ENCODE measurements at regions of chr2 and their contacts with region 1.

Region 1: GRCh38 chr2:46601328-46601963 is 122.1 kb downstream of the TMEM247 start:
- DNase-seq: peak in 2 of 9 experiments; percentile 16 to 35
- ATAC-seq: no peak
- H3K4me3 ChIP-seq: no peak overlapping the region
- H3K4me3 Mint-ChIP-seq: no peak overlapping the region
- H3K27ac ChIP-seq: no peak overlapping the region
- H3K27ac Mint-ChIP-seq: no peak overlapping the region
- H3K4me1 ChIP-seq: no peaks in the 10 kb centered on the region
- H3K4me1 Mint-ChIP-seq: no peaks in the 10 kb centered on the region
- H3K27me3 ChIP-seq: no peaks in the 10 kb centered on the region
- H3K27me3 Mint-ChIP-seq: no peaks in the 10 kb centered on the region
- CTCF ChIP-seq: peak; percentile 56

Region 2: DNA sequence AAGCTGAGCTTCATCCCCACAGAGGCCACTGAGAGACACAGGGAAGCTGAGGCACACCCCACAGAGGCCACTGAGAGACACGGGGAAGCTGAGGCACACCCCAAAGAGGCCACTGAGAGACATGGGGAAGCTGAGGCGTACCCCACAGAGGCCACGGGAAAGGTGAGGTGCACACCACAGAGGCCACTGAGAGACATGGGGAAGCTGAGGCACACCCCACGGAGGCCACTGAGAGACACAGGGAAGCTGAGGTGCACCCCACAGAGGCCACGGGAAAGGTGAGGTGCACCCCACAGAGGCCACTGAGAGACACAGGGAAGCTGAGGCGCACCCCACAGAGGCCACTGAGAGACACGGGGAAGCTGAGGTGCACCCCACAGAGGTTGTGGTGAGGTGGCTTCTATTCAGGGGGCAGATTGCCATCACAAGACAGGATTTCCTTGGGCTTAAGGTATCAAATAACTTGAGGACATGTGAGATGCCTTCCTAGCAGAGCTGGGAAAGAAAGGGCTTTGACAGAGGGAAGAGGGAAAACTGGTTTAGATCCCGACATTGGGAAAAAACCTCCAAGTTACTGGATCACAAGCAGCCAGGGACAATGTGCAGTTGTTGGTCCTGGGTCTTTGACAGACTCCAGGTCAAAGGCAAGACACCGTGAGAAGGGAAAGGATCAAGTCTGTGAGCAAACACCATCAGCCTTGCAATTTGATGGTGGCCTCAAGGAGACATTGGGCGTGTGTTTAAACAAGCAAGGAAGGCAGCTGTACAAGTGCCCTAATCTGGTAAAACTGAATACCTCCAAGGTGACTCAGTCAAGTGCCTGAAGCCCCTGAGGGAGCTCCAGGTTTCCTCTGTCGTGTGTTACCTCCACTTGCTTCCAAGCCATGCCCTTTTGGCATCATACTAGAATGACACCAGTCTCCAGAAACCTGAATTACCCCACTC is 437.6 kb before region 1 on chr2:
- CTCF ChIA-PET with region 1: no interaction called
- POLR2A ChIA-PET with region 1: no interaction called
- intact Hi-C with region 1: no loop called
- DNase-seq: no peak
- ATAC-seq: no peak
- H3K4me3 ChIP-seq: no peak overlapping the region
- H3K4me3 Mint-ChIP-seq: no peak overlapping the region
- H3K27ac ChIP-seq: no peak overlapping the region
- H3K27ac Mint-ChIP-seq: no peak overlapping the region
- H3K4me1 ChIP-seq: no peaks in the 10 kb centered on the region
- H3K4me1 Mint-ChIP-seq: no peaks in the 10 kb centered on the region
- H3K27me3 ChIP-seq: no peaks in the 10 kb centered on the region
- H3K27me3 Mint-ChIP-seq: no peaks in the 10 kb centered on the region
- CTCF ChIP-seq: no peak

Region 3: GRCh38 chr2:46487667-46488333 is 113.6 kb before region 1 on chr2:
- CTCF ChIA-PET with region 1: no interaction called
- POLR2A ChIA-PET with region 1: no interaction called
- intact Hi-C with region 1: no loop called
- DNase-seq: no peak
- ATAC-seq: no peak
- H3K4me3 ChIP-seq: no peak overlapping the region
- H3K4me3 Mint-ChIP-seq: no peak overlapping the region
- H3K27ac ChIP-seq: no peak overlapping the region
- H3K27ac Mint-ChIP-seq: no peak overlapping the region
- H3K4me1 ChIP-seq: no peaks in the 10 kb centered on the region
- H3K4me1 Mint-ChIP-seq: no peaks in the 10 kb centered on the region
- H3K27me3 ChIP-seq: no peaks in the 10 kb centered on the region
- H3K27me3 Mint-ChIP-seq: no peaks in the 10 kb centered on the region
- CTCF ChIP-seq: no peak

Region 4: DNA sequence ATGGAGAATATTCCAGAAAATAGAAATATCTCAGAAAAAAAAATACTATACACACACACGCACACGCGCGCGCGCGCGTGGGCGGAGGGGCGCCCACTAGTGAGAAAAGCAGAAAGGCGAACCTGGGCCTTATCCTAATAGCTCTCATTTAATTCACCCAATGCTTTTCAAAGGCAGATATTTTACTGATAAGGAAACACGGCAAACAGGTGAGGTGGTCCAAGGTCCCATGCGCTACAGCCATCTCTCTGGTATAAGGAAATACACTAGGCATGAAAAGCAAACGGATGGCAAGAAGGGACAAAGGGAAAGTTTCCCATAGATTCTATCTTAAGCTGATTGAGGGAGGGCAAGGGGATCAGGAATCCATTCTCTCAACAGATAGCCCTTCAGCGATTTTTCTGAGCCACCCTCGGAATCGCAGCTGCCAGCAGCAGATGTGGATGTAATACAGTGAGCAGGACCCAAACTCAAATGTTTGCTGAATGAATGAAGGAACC is 14.6 kb after region 1 on chr2:
- CTCF ChIA-PET with region 1: interaction called, 3 read pairs
- POLR2A ChIA-PET with region 1: no interaction called
- intact Hi-C with region 1: loop called in 1 of 2 experiments (anchors 2 kb)
- DNase-seq: peak in 6 of 9 experiments; percentile 6 to 64 (median 16)
- ATAC-seq: no peak
- H3K4me3 ChIP-seq: peak overlapping the region; percentile 95 to 96
- H3K4me3 Mint-ChIP-seq: peak overlapping the region; percentile 97
- H3K27ac ChIP-seq: peak overlapping the region; percentile 92 to 96
- H3K27ac Mint-ChIP-seq: peak overlapping the region; percentile 98
- H3K4me1 ChIP-seq: peaks cover 26% of the 10 kb centered on the region
- H3K4me1 Mint-ChIP-seq: peaks cover 55% of the 10 kb centered on the region
- H3K27me3 ChIP-seq: no peaks in the 10 kb centered on the region
- H3K27me3 Mint-ChIP-seq: no peaks in the 10 kb centered on the region
- CTCF ChIP-seq: no peak

Region 5: GRCh38 chr2:46737577-46737976 is 136.1 kb after region 1 on chr2:
- CTCF ChIA-PET with region 1: no interaction called
- POLR2A ChIA-PET with region 1: no interaction called
- intact Hi-C with region 1: no loop called
- DNase-seq: no peak
- ATAC-seq: no peak
- H3K4me3 ChIP-seq: no peak overlapping the region
- H3K4me3 Mint-ChIP-seq: no peak overlapping the region
- H3K27ac ChIP-seq: no peak overlapping the region
- H3K27ac Mint-ChIP-seq: no peak overlapping the region
- H3K4me1 ChIP-seq: no peaks in the 10 kb centered on the region
- H3K4me1 Mint-ChIP-seq: peaks cover 43% of the 10 kb centered on the region
- H3K27me3 ChIP-seq: no peaks in the 10 kb centered on the region
- H3K27me3 Mint-ChIP-seq: no peaks in the 10 kb centered on the region
- CTCF ChIP-seq: no peak